WTC11 (cell line): ENCODE measurements at regions of chr15 and their contacts with region 1.

Region 1: GRCh38 chr15:48975472-48976419 is 12.0 kb upstream of the SHC4 start:
- DNase-seq: peak; percentile 84
- ATAC-seq: peak; percentile 87
- H3K4me3 Mint-ChIP-seq: peak overlapping the region; percentile 62
- H3K27ac Mint-ChIP-seq: peak overlapping the region; percentile 68
- H3K4me1 Mint-ChIP-seq: peaks cover 18% of the 10 kb centered on the region
- H3K27me3 Mint-ChIP-seq: peaks cover 4% of the 10 kb centered on the region
- CTCF ChIP-seq: peak; percentile 96

Region 2: GRCh38 chr15:48855501-48856440 is 120.0 kb before region 1 on chr15:
- CTCF ChIA-PET with region 1: interaction called, 68 read pairs
- POLR2A ChIA-PET with region 1: no interaction called
- DNase-seq: no peak
- ATAC-seq: peak; percentile 78
- H3K4me3 Mint-ChIP-seq: no peak overlapping the region
- H3K27ac Mint-ChIP-seq: peak overlapping the region; percentile 73
- H3K4me1 Mint-ChIP-seq: peaks cover 29% of the 10 kb centered on the region
- H3K27me3 Mint-ChIP-seq: no peaks in the 10 kb centered on the region
- CTCF ChIP-seq: no peak

Region 3: DNA sequence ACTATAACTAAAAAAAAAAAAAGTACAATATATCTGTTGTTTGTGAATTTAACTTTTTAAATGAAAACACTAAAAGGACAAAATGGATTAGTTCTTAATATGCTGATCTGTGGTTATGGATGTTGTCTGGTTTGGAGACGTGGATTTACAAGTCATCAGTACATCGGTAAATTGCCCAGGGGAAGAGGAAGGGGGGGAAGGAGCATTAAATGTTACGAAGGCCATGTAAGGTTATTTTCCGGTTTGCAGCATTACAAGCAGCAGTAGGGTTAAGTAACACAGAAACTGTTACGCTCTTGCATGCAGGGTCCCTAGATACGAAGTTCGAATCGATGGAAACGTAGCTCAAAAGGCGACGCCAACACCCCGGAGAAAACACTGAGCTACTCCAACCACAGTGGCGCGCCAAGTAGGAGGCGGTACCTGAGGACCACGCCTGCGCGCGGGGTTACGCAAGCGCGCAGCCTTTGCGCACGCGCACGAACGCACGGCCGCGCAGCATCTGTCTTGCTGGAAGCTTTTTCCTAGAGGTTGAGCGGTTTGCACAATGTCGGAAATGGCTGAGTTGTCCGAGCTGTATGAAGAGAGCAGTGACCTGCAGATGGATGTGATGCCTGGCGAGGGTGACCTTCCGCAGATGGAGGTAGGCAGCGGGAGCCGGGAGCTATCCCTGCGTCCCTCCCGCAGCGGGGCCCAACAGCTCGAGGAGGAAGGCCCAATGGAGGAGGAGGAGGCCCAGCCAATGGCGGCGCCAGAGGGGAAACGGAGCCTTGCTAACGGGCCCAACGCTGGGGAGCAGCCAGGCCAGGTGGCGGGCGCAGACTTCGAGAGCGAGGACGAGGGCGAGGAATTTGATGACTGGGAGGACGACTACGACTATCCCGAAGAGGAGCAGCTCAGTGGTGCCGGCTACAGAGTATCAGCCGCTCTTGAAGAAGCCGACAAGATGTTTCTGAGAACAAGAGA is 97.8 kb before region 1 on chr15 and contains the start of gene EID1:
- CTCF ChIA-PET with region 1: interaction called, 44 read pairs
- POLR2A ChIA-PET with region 1: interaction called, 6 read pairs
- DNase-seq: peak; percentile 89
- ATAC-seq: peak; percentile 96
- H3K4me3 Mint-ChIP-seq: peak within 1 kb of the TSS; percentile 99
- H3K27ac Mint-ChIP-seq: peak within 1 kb of the TSS; percentile 99
- H3K4me1 Mint-ChIP-seq: peaks cover 27% of the 10 kb centered on the region
- H3K27me3 Mint-ChIP-seq: peaks cover 17% of the 10 kb centered on the region
- CTCF ChIP-seq: no peak
- total RNA-seq, gene EID1: 89.5 to 104 TPM (median 102 TPM) in 3 replicates

Region 4: GRCh38 chr15:48905847-48906246 is 69.9 kb before region 1 on chr15:
- CTCF ChIA-PET with region 1: interaction called, 11 read pairs
- POLR2A ChIA-PET with region 1: no interaction called
- DNase-seq: no peak
- ATAC-seq: no peak
- H3K4me3 Mint-ChIP-seq: no peak overlapping the region
- H3K27ac Mint-ChIP-seq: no peak overlapping the region
- H3K4me1 Mint-ChIP-seq: no peaks in the 10 kb centered on the region
- H3K27me3 Mint-ChIP-seq: no peaks in the 10 kb centered on the region
- CTCF ChIP-seq: no peak

Region 5: DNA sequence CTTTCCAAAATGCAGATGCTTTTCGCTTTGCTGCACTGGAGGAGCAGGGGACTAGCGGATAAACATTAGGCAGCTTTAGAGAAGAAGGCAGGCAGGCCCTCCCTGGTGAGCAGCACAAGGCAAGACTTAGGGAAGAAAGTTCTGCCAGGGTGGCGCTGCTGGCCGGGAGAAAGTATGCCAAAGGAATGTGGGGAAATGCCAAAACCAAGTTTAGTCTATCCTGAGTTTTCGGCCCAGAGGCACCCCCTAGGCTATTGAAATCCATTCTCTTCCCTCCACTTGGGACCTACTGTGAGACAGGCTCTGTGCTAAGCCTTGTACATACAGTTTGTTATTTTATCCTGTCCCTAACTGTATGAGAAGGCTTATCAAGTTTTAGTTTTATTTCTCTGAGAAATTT is 21.2 kb before region 1 on chr15:
- CTCF ChIA-PET with region 1: interaction called, 24 read pairs
- POLR2A ChIA-PET with region 1: no interaction called
- DNase-seq: peak; percentile 49
- ATAC-seq: peak; percentile 94
- H3K4me3 Mint-ChIP-seq: no peak overlapping the region
- H3K27ac Mint-ChIP-seq: 0 out of 2 replicates have a peak overlapping the region, but pooled peaks have one; percentile 82
- H3K4me1 Mint-ChIP-seq: peaks cover 13% of the 10 kb centered on the region
- H3K27me3 Mint-ChIP-seq: no peaks in the 10 kb centered on the region
- CTCF ChIP-seq: no peak

Region 6: DNA sequence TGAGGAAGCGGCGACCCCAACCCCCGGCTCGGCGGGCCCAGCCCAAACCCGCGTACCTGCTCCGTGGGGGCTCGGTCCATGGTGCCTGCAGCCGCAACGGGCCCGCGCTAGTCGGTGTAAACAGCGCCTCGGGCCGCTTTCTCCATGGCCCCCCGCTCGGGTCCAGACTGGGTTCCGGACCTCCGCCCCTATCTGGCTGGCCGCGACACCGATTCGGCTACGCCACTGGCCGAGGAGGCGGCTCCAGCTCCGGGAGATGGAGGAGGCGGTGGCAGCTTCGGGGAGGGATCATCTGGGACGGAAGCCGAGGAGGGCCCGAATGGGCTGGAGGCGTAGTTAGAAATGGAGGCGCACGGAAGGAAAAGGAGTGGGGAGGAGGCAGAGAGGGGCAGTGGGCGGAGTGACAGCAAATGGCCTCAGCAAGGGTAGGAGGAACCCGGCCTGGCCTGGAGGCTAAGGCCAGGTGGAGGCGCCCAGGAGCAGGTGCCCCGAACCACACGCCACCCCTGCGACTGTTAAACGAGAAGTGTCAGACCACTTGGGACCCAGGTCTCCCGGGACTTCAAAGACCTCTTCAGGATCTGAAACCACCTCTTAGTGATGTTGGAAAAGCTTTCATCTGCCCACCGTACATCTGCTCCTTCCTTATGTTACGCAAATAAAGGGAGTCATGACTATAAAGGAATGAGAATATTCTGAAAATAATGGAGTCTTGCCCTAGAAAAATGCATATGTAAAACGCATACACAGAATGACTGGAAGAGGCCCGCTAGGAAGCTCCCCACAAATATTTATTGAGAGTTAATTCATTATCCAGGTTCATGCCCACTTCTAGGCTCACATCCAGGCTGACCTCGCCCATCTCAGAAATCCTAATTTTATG is 70.7 kb after region 1 on chr15 and contains the start of gene SECISBP2L:
- CTCF ChIA-PET with region 1: interaction called, 11 read pairs
- POLR2A ChIA-PET with region 1: no interaction called
- DNase-seq: peak; percentile 95
- ATAC-seq: peak; percentile 99
- H3K4me3 Mint-ChIP-seq: peak within 1 kb of the TSS; percentile 96
- H3K27ac Mint-ChIP-seq: peak within 1 kb of the TSS; percentile 85
- H3K4me1 Mint-ChIP-seq: peaks cover 17% of the 10 kb centered on the region
- H3K27me3 Mint-ChIP-seq: no peaks in the 10 kb centered on the region; the same call in 1 of the 2 replicates
- CTCF ChIP-seq: no peak
- total RNA-seq, gene SECISBP2L: 28.4 to 30.5 TPM (median 30.4 TPM) in 3 replicates